Posterior cingulate gyrus (tissue), 11 donors: ENCODE measurements at regions of chr4 and their contacts with region 1.

Region 1: GRCh38 chr4:139919521-139919920 is 234.5 kb downstream of the MAML3 start:
- DNase-seq: no peak

Region 2: GRCh38 chr4:139956507-139957017 is 37.0 kb after region 1 on chr4:
- intact Hi-C with region 1: no loop called
- DNase-seq: peak in 2 of 10 donors; percentile 13 to 30

Region 3: DNA sequence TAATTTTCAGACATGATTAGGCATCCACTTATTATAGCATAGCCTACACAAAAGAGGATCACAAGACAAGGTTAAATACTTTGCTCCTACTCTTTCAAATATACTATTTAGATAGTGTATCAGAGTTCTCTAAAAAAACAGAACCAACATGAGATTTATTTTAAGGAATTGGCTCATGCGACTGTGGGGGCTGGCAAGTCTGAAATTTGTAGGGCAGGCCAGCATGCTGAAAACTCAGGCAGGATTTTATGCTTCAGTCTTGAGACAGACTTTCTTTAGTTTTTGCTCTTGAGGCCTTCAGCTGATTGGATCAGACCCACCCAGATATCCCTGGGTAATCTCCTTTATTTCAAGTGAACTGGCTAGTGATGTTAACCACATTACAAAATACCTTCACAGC is 65.0 kb after region 1 on chr4:
- intact Hi-C with region 1: loop called (anchors 2 kb)
- DNase-seq: no peak